Common myeloid progenitor, CD34-positive (primary cell): ENCODE measurements at regions of chr3 and their contacts with region 1.

Region 1: DNA sequence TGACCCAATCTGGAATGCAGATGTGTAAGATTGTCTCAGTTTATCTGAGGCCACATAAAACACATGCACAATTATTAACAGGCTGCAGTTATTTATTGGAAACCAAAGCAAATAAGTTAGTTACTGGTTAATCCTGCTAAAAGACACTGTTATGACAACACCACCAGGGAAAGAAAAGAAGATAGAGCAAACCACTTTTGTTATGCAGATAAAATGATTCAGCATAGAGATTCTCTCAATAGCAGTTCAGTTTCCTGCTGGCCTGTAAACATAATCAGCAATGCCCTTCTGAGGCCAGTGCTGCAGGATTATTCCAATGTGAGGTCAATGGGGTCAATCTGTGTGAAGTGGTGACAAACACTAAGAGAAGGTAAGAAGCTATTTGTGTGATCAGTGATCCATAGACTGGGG is 244.4 kb downstream of the ZBTB20 start:
- DNase-seq: peak in 1 of 3 donors; percentile 15
- H3K4me3 ChIP-seq: no peak overlapping the region
- H3K27ac ChIP-seq: peak overlapping the region; percentile 19 to 87
- H3K4me1 ChIP-seq: peaks cover 16 to 67% (median 26%) of the 10 kb centered on the region in 4 experiments
- H3K27me3 ChIP-seq: no peaks in the 10 kb centered on the region

Region 2: GRCh38 chr3:114770874-114771273 is 131.8 kb before region 1 on chr3:
- CTCF ChIA-PET with region 1: no interaction called
- POLR2A ChIA-PET with region 1: no interaction called
- DNase-seq: no peak
- H3K4me3 ChIP-seq: no peak overlapping the region
- H3K27ac ChIP-seq: no peak overlapping the region
- H3K4me1 ChIP-seq: no peaks in the 10 kb centered on the region
- H3K27me3 ChIP-seq: no peaks in the 10 kb centered on the region

Region 3: GRCh38 chr3:114857299-114857701 is 45.4 kb before region 1 on chr3:
- CTCF ChIA-PET with region 1: interaction called, 11 read pairs
- POLR2A ChIA-PET with region 1: no interaction called
- DNase-seq: peak in 1 of 3 donors; percentile 42
- H3K4me3 ChIP-seq: peak overlapping the region in 2 of 7 experiments; percentile 23 to 26
- H3K27ac ChIP-seq: peak overlapping the region in 1 of 2 experiments; percentile 40
- H3K4me1 ChIP-seq: peaks cover 11 to 45% (median 26%) of the 10 kb centered on the region in 4 experiments
- H3K27me3 ChIP-seq: no peaks in the 10 kb centered on the region

Region 4: DNA sequence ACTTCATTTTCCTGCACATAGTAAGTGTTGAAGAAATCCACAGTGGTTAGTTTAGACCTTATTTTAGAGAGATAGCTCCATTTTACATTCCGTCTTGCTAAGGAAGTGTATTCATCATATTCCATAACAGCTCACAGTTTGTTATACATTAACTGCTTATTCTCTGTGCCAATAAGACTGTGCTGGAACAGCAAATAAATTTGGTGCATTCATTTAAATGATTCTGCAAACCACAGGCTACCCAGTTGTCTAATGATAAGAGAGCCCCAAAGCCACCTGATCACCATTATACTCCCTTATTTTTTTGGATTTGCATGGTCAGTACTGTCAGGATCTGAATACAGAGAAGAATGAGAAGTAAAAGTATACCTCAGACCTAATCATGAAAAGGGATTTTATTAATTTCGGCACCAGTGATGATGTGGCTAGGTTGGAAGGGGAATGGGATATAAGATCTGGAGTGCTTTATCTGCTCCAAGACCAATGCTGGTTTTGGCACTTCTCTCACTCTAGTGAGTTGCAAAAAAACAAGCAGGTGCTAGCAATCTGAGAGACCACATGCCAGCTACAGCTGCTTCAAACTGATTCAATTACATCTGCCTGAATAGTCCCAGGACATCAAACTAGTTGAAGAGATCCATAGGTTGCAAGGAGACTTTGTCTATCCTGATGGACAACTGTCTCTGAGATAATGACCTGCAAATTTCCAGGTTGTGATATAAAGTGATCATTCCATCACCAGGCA is 10.4 kb before region 1 on chr3:
- CTCF ChIA-PET with region 1: interaction called, 10 read pairs
- POLR2A ChIA-PET with region 1: interaction called, 3 read pairs
- DNase-seq: peak in 2 of 3 donors; percentile 57 to 78
- H3K4me3 ChIP-seq: no peak overlapping the region
- H3K27ac ChIP-seq: no peak overlapping the region
- H3K4me1 ChIP-seq: peaks cover 0 to 13% (median 0%) of the 10 kb centered on the region in 4 experiments
- H3K27me3 ChIP-seq: no peaks in the 10 kb centered on the region